Heart left ventricle (tissue), 16 donors: ENCODE measurements at regions of chr2 and their contacts with region 1.

Region 1: GRCh38 chr2:61928826-61929461 is 23.5 kb downstream of the COMMD1 start:
- DNase-seq: no peak
- ATAC-seq: peak in 2 of 4 donors; percentile 45 to 72
- H3K4me3 ChIP-seq: no peak overlapping the region
- H3K27ac ChIP-seq: peak overlapping the region in 8 of 12 donors; percentile 28 to 82 (median 70)
- H3K4me1 ChIP-seq: peaks cover 0 to 15% (median 2%) of the 10 kb centered on the region in 12 donors
- H3K27me3 ChIP-seq: no peaks in the 10 kb centered on the region
- CTCF ChIP-seq: no peak
- POLR2A ChIP-seq: no peak

Region 2: DNA sequence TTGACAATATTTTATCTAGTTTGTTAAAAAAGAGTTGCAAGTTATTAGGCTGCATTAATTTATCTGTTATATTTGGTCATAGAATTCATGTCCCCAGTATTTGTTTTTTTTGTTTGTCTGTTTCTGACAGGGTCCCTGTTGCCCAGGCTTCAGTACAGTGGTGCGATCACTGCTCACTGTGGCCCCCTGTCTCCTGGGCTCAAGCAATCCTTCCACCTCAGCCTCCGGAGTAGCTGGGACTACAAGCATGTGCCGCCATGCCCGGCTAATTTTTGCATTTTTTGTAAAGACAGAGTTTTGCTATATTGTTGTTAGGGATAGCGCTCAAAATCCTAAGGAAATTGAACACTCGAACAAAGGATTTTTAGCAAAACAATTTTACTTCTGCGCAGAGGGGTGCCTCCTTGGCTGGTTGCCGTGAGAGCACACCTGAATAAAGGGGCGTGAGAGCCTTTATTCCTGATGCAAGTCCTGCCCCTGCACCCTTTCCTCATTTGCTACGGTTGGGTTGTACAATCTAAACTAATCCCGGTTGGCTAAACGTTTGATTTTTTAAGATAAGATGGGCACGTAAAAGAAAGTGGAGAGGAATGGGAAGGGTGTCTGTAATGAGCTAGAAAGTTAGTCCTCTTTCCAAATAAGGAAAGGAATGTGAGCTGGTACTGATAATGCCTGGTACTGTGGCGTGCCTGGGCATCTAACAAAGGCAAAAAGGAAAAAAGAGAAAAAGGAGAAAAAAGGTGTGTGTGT is 42.0 kb after region 1 on chr2:
- intact Hi-C with region 1: loop called in 3 of 10 experiments (anchors 5 to 10 kb)
- DNase-seq: no peak
- ATAC-seq: peak in 3 of 4 donors; percentile 61 to 81 (median 65)
- H3K4me3 ChIP-seq: peak overlapping the region in 7 of 12 donors; percentile 3 to 33 (median 15)
- H3K27ac ChIP-seq: peak overlapping the region in 7 of 12 donors; percentile 23 to 71 (median 57)
- H3K4me1 ChIP-seq: peaks cover 0 to 12% (median 9%) of the 10 kb centered on the region in 12 donors
- H3K27me3 ChIP-seq: no peaks in the 10 kb centered on the region
- CTCF ChIP-seq: peak in 2 of 12 donors; percentile 16 to 34
- POLR2A ChIP-seq: no peak

Region 3: GRCh38 chr2:61978522-61978921 is 49.6 kb after region 1 on chr2:
- intact Hi-C with region 1: loop called in 3 of 10 experiments (anchors 5 to 10 kb)
- DNase-seq: peak in 4 of 5 donors; percentile 66 to 76 (median 71)
- ATAC-seq: peak; percentile 92 to 98 (median 96)
- H3K4me3 ChIP-seq: no peak overlapping the region
- H3K27ac ChIP-seq: peak overlapping the region in 10 of 12 donors; percentile 8 to 66 (median 51)
- H3K4me1 ChIP-seq: peaks cover 0 to 19% (median 10%) of the 10 kb centered on the region in 12 donors
- H3K27me3 ChIP-seq: no peaks in the 10 kb centered on the region
- CTCF ChIP-seq: no peak
- POLR2A ChIP-seq: no peak

Region 4: GRCh38 chr2:61993444-61994024 is 64.6 kb after region 1 on chr2:
- intact Hi-C with region 1: loop called in 3 of 10 experiments (anchors 5 kb)
- DNase-seq: peak in 1 of 5 donors; percentile 19
- ATAC-seq: peak in 3 of 4 donors; percentile 67 to 83 (median 75)
- H3K4me3 ChIP-seq: no peak overlapping the region
- H3K27ac ChIP-seq: no peak overlapping the region
- H3K4me1 ChIP-seq: peaks cover 0 to 25% (median 3%) of the 10 kb centered on the region in 12 donors
- H3K27me3 ChIP-seq: no peaks in the 10 kb centered on the region
- CTCF ChIP-seq: peak; percentile 55 to 86 (median 69)
- POLR2A ChIP-seq: no peak

Region 5: DNA sequence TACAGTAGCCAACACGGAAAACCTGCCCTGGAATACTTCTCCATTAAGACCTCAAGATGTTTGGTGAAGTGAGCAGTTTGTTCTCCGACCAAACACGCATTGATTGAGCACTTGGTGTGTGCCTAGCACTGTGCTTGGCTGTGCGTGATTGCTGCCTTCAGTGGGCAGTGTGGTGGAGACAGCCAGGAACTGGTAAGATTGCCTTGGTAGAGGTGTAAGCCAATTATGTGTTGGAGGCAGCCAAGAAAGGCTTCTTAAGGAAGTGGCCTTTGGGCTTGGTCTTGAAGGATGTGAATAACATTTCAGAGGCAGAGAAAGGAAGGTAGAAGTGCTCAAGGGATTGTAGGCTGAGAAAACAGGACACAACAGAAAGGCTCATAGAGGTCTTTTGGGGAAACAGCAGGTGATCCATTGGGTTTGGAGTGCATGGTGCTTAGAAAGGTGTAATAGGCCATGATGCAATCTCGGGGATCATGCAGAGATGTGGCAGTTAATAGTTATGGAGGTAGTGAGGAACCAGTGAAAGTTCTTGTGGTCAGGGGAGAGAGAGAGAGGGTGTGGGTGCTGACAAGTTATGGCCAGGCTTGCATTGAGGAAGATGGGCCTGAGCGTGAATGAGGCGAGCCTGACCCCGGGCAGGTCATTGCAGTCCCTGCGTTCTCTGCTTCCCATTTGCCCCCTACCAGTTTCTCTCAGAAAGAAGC is 273.2 kb after region 1 on chr2:
- intact Hi-C with region 1: loop called in 2 of 10 experiments (anchors 10 kb)
- DNase-seq: no peak
- ATAC-seq: peak in 1 of 4 donors; percentile 33
- H3K4me3 ChIP-seq: no peak overlapping the region
- H3K27ac ChIP-seq: peak overlapping the region in 4 of 12 donors; percentile 16 to 37 (median 24)
- H3K4me1 ChIP-seq: peaks cover 0 to 93% (median 66%) of the 10 kb centered on the region in 12 donors
- H3K27me3 ChIP-seq: no peaks in the 10 kb centered on the region
- CTCF ChIP-seq: no peak
- POLR2A ChIP-seq: no peak

Region 6: GRCh38 chr2:62293490-62294271 is 364.7 kb after region 1 on chr2:
- intact Hi-C with region 1: loop called in 1 of 10 experiments (anchors 10 kb)
- DNase-seq: peak; percentile 45 to 73 (median 60)
- ATAC-seq: peak; percentile 53 to 84 (median 80)
- H3K4me3 ChIP-seq: peak overlapping the region in 1 of 12 donors; percentile 12
- H3K27ac ChIP-seq: peak overlapping the region in 11 of 12 donors; percentile 17 to 76 (median 54)
- H3K4me1 ChIP-seq: peaks cover 5 to 52% (median 33%) of the 10 kb centered on the region in 12 donors
- H3K27me3 ChIP-seq: no peaks in the 10 kb centered on the region
- CTCF ChIP-seq: no peak
- POLR2A ChIP-seq: no peak